ENCODE measurements at regions of chr18 and their contacts with region 1.

Region 1: DNA sequence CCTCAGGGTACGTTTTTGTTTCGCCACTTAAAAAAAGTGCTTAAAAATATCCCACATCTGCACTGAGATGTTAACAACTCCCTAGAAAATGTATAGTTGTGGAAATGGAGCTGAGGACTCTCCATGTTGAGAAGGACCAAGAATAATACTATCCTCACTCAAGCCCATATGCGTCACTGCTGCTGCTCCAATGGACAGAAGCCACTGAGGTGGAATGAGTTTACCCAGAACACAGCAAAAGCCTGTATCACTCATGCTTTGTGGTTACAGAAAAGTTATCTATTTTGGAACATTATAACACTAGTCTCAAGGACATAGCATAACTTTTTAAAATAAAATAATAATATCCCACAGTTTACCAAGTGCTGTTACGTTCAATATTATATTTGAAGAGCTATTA is 31.9 kb downstream of the DSC3 start:
- DNase-seq: no peak
- ATAC-seq: no peak
- H3K4me3 ChIP-seq: no peak overlapping the region
- H3K27ac ChIP-seq: no peak overlapping the region
- H3K4me1 ChIP-seq: peaks cover 9 to 30% of the 10 kb centered on the region in 2 experiments
- H3K27me3 ChIP-seq: no peaks in the 10 kb centered on the region
- CTCF ChIP-seq: no peak
- POLR2A ChIP-seq: no peak
- RAD21 ChIP-seq: no peak

Region 2: GRCh38 chr18:30676053-30676480 is 334.5 kb before region 1 on chr18:
- CTCF ChIA-PET with region 1: no interaction called
- POLR2A ChIA-PET with region 1: no interaction called
- RAD21 ChIA-PET with region 1: no interaction called
- intact Hi-C with region 1: no loop called
- DNase-seq: no peak
- ATAC-seq: no peak
- H3K4me3 ChIP-seq: no peak overlapping the region
- H3K27ac ChIP-seq: no peak overlapping the region
- H3K4me1 ChIP-seq: no peaks in the 10 kb centered on the region
- H3K27me3 ChIP-seq: no peaks in the 10 kb centered on the region
- CTCF ChIP-seq: no peak
- POLR2A ChIP-seq: no peak
- RAD21 ChIP-seq: no peak

Region 3: DNA sequence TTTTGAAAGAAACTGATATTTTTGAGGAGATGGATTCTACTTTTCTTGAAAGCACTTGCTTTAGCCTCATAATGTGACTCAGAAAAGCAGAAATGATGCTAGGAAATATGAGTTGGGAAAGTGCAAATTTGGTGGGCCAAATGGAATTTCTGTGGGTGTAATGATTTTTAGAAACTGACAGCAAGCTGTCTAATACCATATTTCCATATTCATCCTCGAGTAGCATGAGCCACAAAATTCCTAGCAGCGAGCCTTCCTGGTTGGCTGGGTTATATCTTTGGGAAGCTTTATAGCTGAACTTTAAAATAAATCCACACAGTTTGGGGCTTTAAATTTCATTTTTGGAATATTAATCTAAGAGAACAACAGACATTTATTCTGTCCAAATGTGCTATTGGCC is 158.1 kb before region 1 on chr18:
- CTCF ChIA-PET with region 1: no interaction called
- POLR2A ChIA-PET with region 1: no interaction called
- RAD21 ChIA-PET with region 1: no interaction called
- intact Hi-C with region 1: no loop called
- DNase-seq: no peak
- ATAC-seq: no peak
- H3K4me3 ChIP-seq: no peak overlapping the region
- H3K27ac ChIP-seq: no peak overlapping the region
- H3K4me1 ChIP-seq: no peaks in the 10 kb centered on the region
- H3K27me3 ChIP-seq: no peaks in the 10 kb centered on the region
- CTCF ChIP-seq: no peak
- POLR2A ChIP-seq: no peak
- RAD21 ChIP-seq: no peak

Region 4: GRCh38 chr18:30862900-30863299 is 147.7 kb before region 1 on chr18:
- CTCF ChIA-PET with region 1: no interaction called
- POLR2A ChIA-PET with region 1: no interaction called
- RAD21 ChIA-PET with region 1: no interaction called
- intact Hi-C with region 1: no loop called
- DNase-seq: no peak
- ATAC-seq: no peak
- H3K4me3 ChIP-seq: no peak overlapping the region
- H3K27ac ChIP-seq: no peak overlapping the region
- H3K4me1 ChIP-seq: no peaks in the 10 kb centered on the region
- H3K27me3 ChIP-seq: no peaks in the 10 kb centered on the region
- CTCF ChIP-seq: no peak
- POLR2A ChIP-seq: no peak
- RAD21 ChIP-seq: no peak

Region 5: GRCh38 chr18:30987450-30988241 is 23.0 kb before region 1 on chr18:
- CTCF ChIA-PET with region 1: no interaction called
- POLR2A ChIA-PET with region 1: no interaction called
- RAD21 ChIA-PET with region 1: interaction called in 1 of 2 experiments, 8 read pairs
- intact Hi-C with region 1: loop called (anchors 1 kb)
- DNase-seq: peak; percentile 83
- ATAC-seq: peak; percentile 99
- H3K4me3 ChIP-seq: peak overlapping the region in 1 of 2 experiments; percentile 28; a peak in 2 of 4 replicates
- H3K27ac ChIP-seq: no peak overlapping the region
- H3K4me1 ChIP-seq: peaks cover 13 to 20% of the 10 kb centered on the region in 2 experiments
- H3K27me3 ChIP-seq: no peaks in the 10 kb centered on the region
- CTCF ChIP-seq: no peak
- POLR2A ChIP-seq: no peak
- RAD21 ChIP-seq: no peak

Region 6: DNA sequence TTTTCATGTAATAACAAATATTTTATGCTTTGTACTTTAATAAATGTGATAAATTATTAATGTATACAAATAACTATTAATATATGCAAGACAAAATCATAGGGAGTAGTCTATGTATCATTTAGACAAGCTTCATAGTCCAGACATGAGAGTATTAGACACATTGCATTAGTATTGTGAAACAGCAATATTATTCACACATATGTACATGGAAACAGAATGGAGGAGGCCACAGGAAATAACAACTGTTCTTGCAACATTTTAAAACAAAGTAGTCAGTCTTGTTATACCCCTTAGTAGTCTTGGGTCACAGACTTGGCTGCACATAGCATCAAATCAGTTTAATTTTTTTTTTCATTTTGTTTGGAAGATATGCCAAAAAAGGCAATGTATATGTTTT is 136.2 kb after region 1 on chr18:
- CTCF ChIA-PET with region 1: no interaction called
- POLR2A ChIA-PET with region 1: no interaction called
- RAD21 ChIA-PET with region 1: no interaction called
- intact Hi-C with region 1: no loop called
- DNase-seq: no peak
- ATAC-seq: no peak
- H3K4me3 ChIP-seq: no peak overlapping the region
- H3K27ac ChIP-seq: no peak overlapping the region
- H3K4me1 ChIP-seq: no peaks in the 10 kb centered on the region
- H3K27me3 ChIP-seq: no peaks in the 10 kb centered on the region
- CTCF ChIP-seq: no peak
- POLR2A ChIP-seq: no peak
- RAD21 ChIP-seq: no peak

Region 7: GRCh38 chr18:31230495-31230894 is 219.9 kb after region 1 on chr18:
- CTCF ChIA-PET with region 1: no interaction called
- POLR2A ChIA-PET with region 1: no interaction called
- RAD21 ChIA-PET with region 1: interaction called in 1 of 2 experiments, 5 read pairs
- intact Hi-C with region 1: loop called (anchors 10 kb)
- DNase-seq: peak; percentile 89
- ATAC-seq: peak; percentile 82
- H3K4me3 ChIP-seq: peak overlapping the region in 1 of 2 experiments; percentile 41; a peak in 2 of 4 replicates
- H3K27ac ChIP-seq: peak overlapping the region; percentile 39; the same call in 1 of the 2 replicates
- H3K4me1 ChIP-seq: peaks cover 30 to 65% of the 10 kb centered on the region in 2 experiments
- H3K27me3 ChIP-seq: no peaks in the 10 kb centered on the region
- CTCF ChIP-seq: no peak
- POLR2A ChIP-seq: no peak
- RAD21 ChIP-seq: peak; percentile 40; the same call in 1 of the 2 replicates

Measured in HCT116 (cell line).